ENCODE measurements at regions of chrX and their contacts with region 1.

Region 1: GRCh38 chrX:43741843-43742573 is 85.9 kb downstream of the MAOA start:
- DNase-seq: peak in 1 of 2 donors; percentile 22
- H3K4me3 ChIP-seq: no peak overlapping the region
- H3K27ac ChIP-seq: peak overlapping the region in 1 of 2 donors; percentile 72
- H3K4me1 ChIP-seq: no peaks in the 10 kb centered on the region
- H3K27me3 ChIP-seq: peaks cover 0 to 38% of the 10 kb centered on the region in 2 donors
- CTCF ChIP-seq: no peak
- POLR2A ChIP-seq: no peak

Region 2: DNA sequence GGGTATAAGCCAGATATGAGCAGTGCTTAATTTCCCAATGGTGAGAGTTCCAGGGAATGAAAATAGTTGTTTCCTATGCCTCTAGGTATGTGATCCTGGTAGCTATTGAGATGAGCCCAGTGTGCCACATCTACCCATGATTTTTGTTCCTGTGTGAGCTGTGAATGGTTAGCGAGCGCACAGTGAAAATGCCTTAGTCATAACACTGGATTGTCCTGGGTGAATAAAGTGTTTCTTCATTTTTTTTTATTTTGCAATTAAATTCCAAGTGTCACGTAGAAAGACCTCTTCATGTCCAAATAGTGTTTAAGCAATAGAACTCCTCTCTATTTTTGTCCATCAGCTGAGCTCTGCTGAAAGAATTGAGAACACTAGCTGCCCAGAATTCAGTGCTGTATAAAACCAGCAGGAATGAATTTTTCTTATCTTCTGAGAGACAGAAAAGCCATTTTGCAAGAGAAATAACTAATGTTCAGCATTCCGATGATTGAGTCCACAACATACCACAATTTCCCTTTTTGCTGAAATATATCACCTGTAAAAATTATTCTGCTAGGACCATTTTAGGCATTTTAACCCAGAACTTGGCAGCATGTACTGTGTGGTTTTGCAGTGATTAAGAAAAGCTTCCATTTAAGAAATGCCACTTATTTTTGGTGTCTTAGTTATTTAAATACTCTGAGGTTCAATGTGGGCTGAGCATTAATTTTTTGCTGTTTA is 80.3 kb before region 1 on chrX:
- intact Hi-C with region 1: loop called (anchors 5 kb)
- DNase-seq: no peak
- H3K4me3 ChIP-seq: no peak overlapping the region
- H3K27ac ChIP-seq: peak overlapping the region; percentile 38 to 55
- H3K4me1 ChIP-seq: no peaks in the 10 kb centered on the region
- H3K27me3 ChIP-seq: peaks cover 0 to 20% of the 10 kb centered on the region in 2 donors
- CTCF ChIP-seq: no peak
- POLR2A ChIP-seq: no peak

Region 3: DNA sequence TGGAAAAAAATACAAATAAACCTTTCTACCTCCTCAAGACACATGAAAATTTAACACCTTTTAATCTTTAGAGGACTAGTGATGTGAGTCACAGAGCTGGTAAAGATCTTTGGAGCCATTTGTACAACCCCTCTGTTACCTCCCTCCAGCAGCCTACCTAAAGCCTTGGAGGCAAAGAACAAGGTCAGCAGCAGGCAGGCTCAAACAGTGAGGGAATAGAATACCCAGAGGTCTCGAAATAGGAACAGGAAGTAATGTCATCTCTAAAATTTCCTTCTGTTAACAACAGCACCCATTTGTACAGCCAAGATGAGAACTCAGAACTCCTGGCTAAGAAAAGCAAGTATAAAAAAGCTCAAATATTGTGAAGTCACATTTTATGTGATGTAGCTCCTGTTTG is 150.5 kb after region 1 on chrX:
- intact Hi-C with region 1: loop called (anchors 5 kb)
- DNase-seq: no peak
- H3K4me3 ChIP-seq: no peak overlapping the region
- H3K27ac ChIP-seq: peak overlapping the region in 1 of 2 donors; percentile 28
- H3K4me1 ChIP-seq: no peaks in the 10 kb centered on the region
- H3K27me3 ChIP-seq: peaks cover 0 to 13% of the 10 kb centered on the region in 2 donors
- CTCF ChIP-seq: no peak
- POLR2A ChIP-seq: no peak